Dorsolateral prefrontal cortex (tissue), 120 donors: ENCODE measurements at regions of chr7 and their contacts with region 1.

Region 1: DNA sequence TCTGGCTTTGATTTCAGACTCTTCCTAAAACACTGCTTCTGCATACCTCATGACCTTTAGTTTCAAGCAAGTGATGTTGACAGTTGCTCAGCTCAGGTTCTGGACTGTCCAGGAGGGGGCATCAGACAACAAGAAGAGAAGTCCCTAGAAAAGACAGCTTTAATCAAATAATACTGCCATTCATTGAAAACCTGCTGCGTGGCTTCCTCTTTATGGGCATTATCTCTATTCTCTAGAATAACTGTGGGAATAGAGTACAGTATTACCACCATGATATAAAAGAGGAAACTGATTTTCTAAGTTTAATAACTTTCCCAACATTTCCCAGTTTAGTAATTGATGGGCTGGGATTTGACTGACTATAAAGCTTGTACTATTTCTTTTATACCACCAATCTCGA is 170.4 kb downstream of the SNX13 start:
- DNase-seq: peak in 6 of 10 donors; percentile 13 to 71 (median 50)
- H3K4me3 ChIP-seq: peak overlapping the region in 1 of 59 donors; percentile 28
- H3K27ac ChIP-seq: no peak overlapping the region
- H3K27me3 ChIP-seq: no peaks in the 10 kb centered on the region
- CTCF ChIP-seq: peak; percentile 25 to 86 (median 69)

Region 2: DNA sequence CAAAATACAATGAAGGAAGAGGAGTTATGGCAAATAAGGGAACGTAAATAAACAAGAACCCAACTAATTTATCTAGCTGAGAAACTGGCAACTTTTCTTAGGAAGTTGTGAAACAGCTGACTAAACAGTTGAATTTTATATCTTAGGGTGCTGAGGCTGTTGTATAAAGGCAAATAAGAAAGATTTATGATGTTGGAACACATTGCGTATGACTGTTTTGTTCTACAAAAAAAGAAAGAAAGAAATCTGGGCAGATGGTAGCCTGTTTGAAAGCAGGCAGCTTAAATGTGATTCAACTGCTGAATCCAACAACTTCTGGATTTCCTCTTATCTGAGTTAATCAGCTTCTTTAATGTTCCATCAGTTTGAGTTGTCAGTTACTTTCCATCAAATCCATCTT is 44.1 kb before region 1 on chr7:
- intact Hi-C with region 1: no loop called
- DNase-seq: no peak
- H3K4me3 ChIP-seq: no peak overlapping the region
- H3K27ac ChIP-seq: peak overlapping the region in 14 of 59 donors; percentile 1 to 70 (median 34)
- H3K27me3 ChIP-seq: no peaks in the 10 kb centered on the region
- CTCF ChIP-seq: no peak

Region 3: DNA sequence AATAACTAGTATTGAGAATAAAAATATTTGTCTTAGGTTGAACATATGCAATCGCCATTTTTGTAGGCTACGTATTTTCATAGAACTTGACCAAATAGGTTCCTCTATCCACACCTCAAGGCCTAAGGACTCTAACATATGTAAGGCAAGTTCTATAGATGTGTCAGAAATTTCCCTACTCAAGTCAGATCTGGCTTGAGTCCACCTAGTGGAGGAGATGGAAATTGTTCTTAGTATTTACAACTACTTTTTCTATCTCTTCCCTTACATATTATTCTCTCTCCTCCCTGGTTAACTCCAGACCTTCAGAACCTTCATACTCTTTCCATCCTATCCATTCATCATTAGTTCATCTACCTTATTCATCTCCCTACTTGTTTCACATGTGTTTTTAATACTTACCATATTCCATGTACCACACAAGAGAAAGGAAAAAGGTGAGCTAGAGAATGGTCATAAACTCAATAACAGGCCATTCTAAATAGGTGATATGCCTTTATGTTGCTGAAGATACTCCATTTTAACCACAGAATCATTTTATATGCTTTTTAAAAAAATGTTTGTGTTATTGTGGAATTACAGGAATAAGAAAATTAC is 551.2 kb after region 1 on chr7:
- intact Hi-C with region 1: loop called in 1 of 2 experiments (anchors 10 kb)
- DNase-seq: no peak
- H3K4me3 ChIP-seq: no peak overlapping the region
- H3K27ac ChIP-seq: no peak overlapping the region
- H3K27me3 ChIP-seq: no peaks in the 10 kb centered on the region
- CTCF ChIP-seq: peak; percentile 24 to 66 (median 47)